IMR-90 (cell line): ENCODE measurements at regions of chr1 and their contacts with region 1.

Region 1: DNA sequence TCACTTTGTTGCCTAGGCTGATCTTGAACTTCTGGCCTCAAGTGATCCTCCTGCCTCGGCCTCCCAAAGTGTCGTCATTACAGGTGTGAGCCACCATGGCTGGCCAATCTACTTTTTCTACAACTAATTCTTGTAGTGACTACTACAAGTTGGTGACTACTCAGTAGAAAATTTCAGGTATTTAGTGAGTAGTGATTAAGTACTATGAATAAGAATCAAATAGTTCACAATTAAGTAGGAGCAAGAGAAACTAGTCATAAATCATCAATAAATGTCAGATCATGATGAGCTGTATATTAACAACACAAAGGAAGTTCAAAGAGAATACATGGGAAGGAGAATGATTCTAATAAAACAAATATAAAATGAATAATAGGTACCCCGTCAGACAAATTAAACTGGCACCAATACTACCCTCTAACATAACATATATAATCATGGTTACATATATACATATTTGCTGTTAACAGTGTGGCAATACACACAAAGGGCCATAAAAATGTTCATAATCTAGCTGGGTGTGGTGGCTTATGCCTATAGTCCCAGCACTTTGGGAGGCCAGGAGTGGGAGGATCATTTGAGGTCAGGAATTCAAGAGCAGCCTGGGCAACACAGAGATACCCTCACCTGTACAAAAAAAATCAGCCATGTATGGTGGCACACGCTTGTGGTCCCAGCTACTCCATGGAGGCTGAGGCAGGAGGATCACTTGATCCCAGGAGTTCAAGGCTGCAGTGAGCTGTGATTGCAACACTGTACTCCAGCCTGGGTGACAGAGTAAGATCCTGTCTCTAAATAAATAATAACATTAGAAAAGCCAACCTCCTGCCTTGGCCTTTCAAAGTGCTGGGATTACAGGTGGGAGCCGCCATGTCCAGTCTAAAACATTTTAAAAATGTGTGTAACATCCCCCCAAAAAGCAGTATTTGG is 19.1 kb downstream of the YY1AP1 start:
- DNase-seq: no peak
- ATAC-seq: no peak
- H3K4me3 ChIP-seq: no peak overlapping the region
- H3K27ac ChIP-seq: no peak overlapping the region
- H3K4me1 ChIP-seq: no peaks in the 10 kb centered on the region
- H3K27me3 ChIP-seq: no peaks in the 10 kb centered on the region
- CTCF ChIP-seq: no peak
- POLR2A ChIP-seq: no peak
- RAD21 ChIP-seq: no peak

Region 2: GRCh38 chr1:155139895-155140631 is 529.4 kb before region 1 on chr1 and contains the start of gene DPM3:
- CTCF ChIA-PET with region 1: no interaction called
- POLR2A ChIA-PET with region 1: no interaction called
- dilution Hi-C with region 1: no loop called
- in situ Hi-C with region 1: no loop called
- intact Hi-C with region 1: no loop called
- DNase-seq: peak; percentile 72
- ATAC-seq: peak; percentile 69
- H3K4me3 ChIP-seq: peak within 1 kb of the TSS; percentile 79
- H3K27ac ChIP-seq: peak within 1 kb of the TSS; percentile 83
- H3K4me1 ChIP-seq: peaks cover 4% of the 10 kb centered on the region; the same call in 1 of the 2 replicates
- H3K27me3 ChIP-seq: peaks cover 3% of the 10 kb centered on the region; the same call in 1 of the 2 replicates
- CTCF ChIP-seq: no peak
- POLR2A ChIP-seq: peak; percentile 42; the same call in 1 of the 2 replicates
- RAD21 ChIP-seq: no peak; the same call in 1 of the 2 replicates
- total RNA-seq, gene DPM3: 29.0 and 30.6 TPM in 2 replicates

Region 3: GRCh38 chr1:155352631-155353030 is 316.9 kb before region 1 on chr1:
- CTCF ChIA-PET with region 1: no interaction called
- POLR2A ChIA-PET with region 1: no interaction called
- dilution Hi-C with region 1: no loop called
- in situ Hi-C with region 1: no loop called
- intact Hi-C with region 1: loop called (anchors 10 kb)
- DNase-seq: no peak
- ATAC-seq: no peak
- H3K4me3 ChIP-seq: no peak overlapping the region
- H3K27ac ChIP-seq: no peak overlapping the region
- H3K4me1 ChIP-seq: no peaks in the 10 kb centered on the region
- H3K27me3 ChIP-seq: no peaks in the 10 kb centered on the region
- CTCF ChIP-seq: no peak
- POLR2A ChIP-seq: no peak
- RAD21 ChIP-seq: no peak